CD8-positive, alpha-beta T cell (primary cell): ENCODE measurements at regions of chr9 and their contacts with region 1.

Region 1: DNA sequence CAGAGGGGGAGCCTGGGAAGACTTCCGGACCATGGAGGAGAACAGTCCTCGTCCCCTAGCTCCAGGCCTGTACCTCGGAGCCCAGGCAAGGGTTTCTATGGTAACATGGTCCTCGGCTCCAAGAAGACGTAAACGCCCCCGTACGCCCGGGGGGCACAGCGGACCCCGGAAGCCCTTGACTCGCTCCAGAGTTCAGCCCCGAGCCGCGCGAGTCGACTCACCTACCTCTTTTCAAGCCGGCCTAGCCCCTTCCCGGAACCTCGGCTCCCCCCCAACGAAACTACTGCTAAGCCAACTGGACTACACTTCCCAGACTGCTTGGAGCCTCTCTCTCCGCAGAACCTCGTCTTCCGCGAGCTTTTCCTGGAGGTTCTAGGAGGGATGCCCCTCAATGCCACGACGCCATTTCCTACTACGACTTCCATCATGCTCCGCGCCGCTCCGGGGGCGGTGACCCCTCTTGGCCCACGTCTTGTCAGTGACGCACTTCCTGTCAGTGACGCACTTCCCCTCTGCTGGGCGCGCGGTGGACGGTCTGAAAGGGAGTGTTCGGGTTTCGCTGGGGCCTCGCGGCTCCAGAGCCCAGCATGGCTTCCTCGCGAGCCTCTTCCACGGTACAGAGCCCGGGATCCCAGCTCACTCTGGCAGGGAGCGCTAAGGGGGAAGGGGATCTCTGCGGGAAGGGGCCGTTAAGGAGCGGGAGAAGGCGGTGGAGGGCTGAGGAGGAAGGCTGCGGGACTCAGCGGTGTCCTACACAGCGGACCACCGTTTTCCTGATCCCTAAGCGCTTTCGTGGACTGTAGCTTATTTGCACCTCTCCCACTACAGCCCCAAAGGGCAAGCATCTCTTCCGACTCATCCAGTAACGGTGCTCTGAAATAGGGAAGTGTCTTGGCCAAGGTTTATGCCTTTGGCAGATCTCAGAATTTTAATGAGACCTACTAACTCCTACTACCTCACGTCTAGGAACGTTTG is at the starts of genes CDC26 and PRPF4:
- DNase-seq: peak; percentile 87 to 99 (median 95)
- ATAC-seq: peak; percentile 89
- H3K4me3 ChIP-seq: peak within 1 kb of the TSS; percentile 78 to 97
- H3K4me3 Mint-ChIP-seq: no peak within 1 kb of the TSS
- H3K27ac ChIP-seq: peak within 1 kb of the TSS; percentile 92 to 97
- H3K27ac Mint-ChIP-seq: no peak within 1 kb of the TSS
- H3K4me1 ChIP-seq: peaks cover 12% of the 10 kb centered on the region
- H3K4me1 Mint-ChIP-seq: peaks cover 46% of the 10 kb centered on the region
- H3K27me3 ChIP-seq: no peaks in the 10 kb centered on the region
- H3K27me3 Mint-ChIP-seq: no peaks in the 10 kb centered on the region
- CTCF ChIP-seq: no peak
- total RNA-seq, gene CDC26: 13.1 TPM
- total RNA-seq, gene PRPF4: 24.4 to 24.8 TPM

Region 2: DNA sequence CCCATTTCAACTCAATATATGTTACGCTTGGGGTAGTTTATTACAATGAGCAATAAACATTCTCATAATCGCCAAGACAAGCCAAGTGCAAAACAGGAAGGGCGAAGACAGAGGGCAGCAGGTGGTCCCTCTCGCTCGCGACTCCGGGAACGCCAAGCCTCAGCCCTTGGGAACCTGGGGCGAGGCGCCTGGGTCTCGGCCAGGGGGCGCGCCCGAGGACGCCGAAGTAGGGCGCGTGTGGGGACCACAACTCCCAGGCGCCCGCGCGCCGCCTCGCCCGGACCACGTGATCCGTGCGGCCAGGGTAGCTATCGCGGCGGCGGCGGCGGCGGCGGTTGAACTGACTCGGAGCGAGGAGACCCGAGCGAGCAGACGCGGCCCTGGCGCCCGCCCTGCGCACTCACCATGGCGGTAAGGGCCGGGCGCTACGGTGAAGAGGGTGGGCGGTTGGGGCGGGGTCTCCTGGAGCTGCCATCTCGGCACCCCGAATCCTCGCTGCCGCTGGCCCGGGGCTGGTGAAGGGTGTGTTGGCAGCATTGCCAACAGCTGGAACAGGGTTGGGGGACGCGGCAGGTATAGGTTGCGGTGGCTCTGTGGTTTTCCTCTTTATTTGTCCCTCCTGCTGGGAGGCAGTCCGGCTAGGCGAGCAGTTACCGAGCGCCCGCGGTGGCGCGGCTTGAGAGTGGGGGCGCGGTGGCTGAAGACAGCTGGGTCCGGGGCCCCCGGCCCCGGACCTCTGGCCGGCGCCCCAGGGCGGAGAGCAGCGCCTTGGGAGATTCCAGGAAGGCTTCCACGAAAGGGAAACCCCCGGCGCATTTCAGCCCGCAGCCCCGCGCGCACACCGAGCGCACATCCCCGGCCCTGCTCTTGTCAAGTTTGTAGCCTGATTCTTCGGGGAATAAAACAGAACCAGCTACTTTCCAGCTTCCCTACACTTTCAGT is 124.5 kb before region 1 on chr9 and contains the start of gene SLC31A2:
- CTCF ChIA-PET with region 1: interaction called, 3 read pairs
- POLR2A ChIA-PET with region 1: interaction called, 4 read pairs
- intact Hi-C with region 1: loop called (anchors 1 kb)
- DNase-seq: peak; percentile 61 to 91 (median 85)
- ATAC-seq: peak; percentile 94
- H3K4me3 ChIP-seq: peak within 1 kb of the TSS; percentile 83 to 88
- H3K4me3 Mint-ChIP-seq: peak within 1 kb of the TSS; percentile 83
- H3K27ac ChIP-seq: peak within 1 kb of the TSS; percentile 38 to 52
- H3K27ac Mint-ChIP-seq: peak within 1 kb of the TSS; percentile 41
- H3K4me1 ChIP-seq: peaks cover 20% of the 10 kb centered on the region
- H3K4me1 Mint-ChIP-seq: peaks cover 35% of the 10 kb centered on the region
- H3K27me3 ChIP-seq: no peaks in the 10 kb centered on the region
- H3K27me3 Mint-ChIP-seq: no peaks in the 10 kb centered on the region
- CTCF ChIP-seq: peak; percentile 33
- total RNA-seq, gene SLC31A2: 5.4 to 6.0 TPM

Region 3: DNA sequence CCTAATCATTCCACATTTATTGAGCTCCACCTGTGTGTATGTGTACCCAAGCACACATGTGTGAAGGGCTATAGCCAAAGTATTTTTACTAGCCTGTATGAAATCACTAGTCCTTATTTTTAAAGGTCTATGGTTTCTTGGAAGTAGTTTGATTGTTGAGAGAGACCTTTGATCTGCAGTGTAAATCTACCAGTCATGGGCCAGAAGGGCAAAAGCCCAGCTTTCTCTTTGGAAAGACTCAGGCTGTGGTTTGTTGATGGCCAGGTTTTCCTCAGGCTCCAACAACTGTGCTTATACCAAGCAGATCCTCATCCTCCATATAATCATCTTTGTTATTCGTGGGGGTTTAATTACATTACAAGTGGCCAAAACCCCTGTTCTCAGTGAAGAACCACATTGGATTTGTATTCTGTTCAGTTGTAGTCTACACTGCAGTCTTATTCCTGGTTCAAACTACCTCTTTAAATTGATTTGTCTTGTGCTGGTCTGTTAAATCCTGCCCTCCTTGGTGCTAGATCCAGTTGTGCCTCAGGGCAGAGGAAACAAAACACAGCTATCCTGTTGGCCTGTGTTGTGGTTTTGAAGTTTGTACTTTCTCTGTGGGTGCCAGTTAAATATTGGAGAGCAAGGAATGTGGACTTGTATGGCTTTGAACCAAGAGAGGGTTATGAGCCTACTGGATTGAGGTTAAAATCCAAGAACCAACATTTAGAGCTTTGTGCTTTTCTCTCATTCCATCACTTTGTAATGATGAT is 13.3 kb before region 1 on chr9:
- CTCF ChIA-PET with region 1: interaction called, 17 read pairs
- POLR2A ChIA-PET with region 1: interaction called, 4 read pairs
- intact Hi-C with region 1: no loop called
- DNase-seq: no peak
- ATAC-seq: no peak
- H3K4me3 ChIP-seq: no peak overlapping the region
- H3K4me3 Mint-ChIP-seq: no peak overlapping the region
- H3K27ac ChIP-seq: no peak overlapping the region
- H3K27ac Mint-ChIP-seq: no peak overlapping the region
- H3K4me1 ChIP-seq: no peaks in the 10 kb centered on the region
- H3K4me1 Mint-ChIP-seq: no peaks in the 10 kb centered on the region
- H3K27me3 ChIP-seq: no peaks in the 10 kb centered on the region
- H3K27me3 Mint-ChIP-seq: no peaks in the 10 kb centered on the region
- CTCF ChIP-seq: no peak

Region 4: GRCh38 chr9:113401027-113401792 is 125.8 kb after region 1 on chr9 and contains the start of gene ALAD:
- CTCF ChIA-PET with region 1: interaction called, 32 read pairs
- POLR2A ChIA-PET with region 1: no interaction called
- intact Hi-C with region 1: loop called (anchors 1 kb)
- DNase-seq: peak; percentile 98 to 100 (median 100)
- ATAC-seq: peak; percentile 99
- H3K4me3 ChIP-seq: peak within 1 kb of the TSS; percentile 80 to 81
- H3K4me3 Mint-ChIP-seq: peak within 1 kb of the TSS; percentile 97
- H3K27ac ChIP-seq: peak within 1 kb of the TSS; percentile 53
- H3K27ac Mint-ChIP-seq: peak within 1 kb of the TSS; percentile 92
- H3K4me1 ChIP-seq: peaks cover 16% of the 10 kb centered on the region
- H3K4me1 Mint-ChIP-seq: peaks cover 28% of the 10 kb centered on the region
- H3K27me3 ChIP-seq: no peaks in the 10 kb centered on the region
- H3K27me3 Mint-ChIP-seq: no peaks in the 10 kb centered on the region
- CTCF ChIP-seq: peak; percentile 94
- total RNA-seq, gene ALAD: 11.2 to 11.5 TPM

Region 5: DNA sequence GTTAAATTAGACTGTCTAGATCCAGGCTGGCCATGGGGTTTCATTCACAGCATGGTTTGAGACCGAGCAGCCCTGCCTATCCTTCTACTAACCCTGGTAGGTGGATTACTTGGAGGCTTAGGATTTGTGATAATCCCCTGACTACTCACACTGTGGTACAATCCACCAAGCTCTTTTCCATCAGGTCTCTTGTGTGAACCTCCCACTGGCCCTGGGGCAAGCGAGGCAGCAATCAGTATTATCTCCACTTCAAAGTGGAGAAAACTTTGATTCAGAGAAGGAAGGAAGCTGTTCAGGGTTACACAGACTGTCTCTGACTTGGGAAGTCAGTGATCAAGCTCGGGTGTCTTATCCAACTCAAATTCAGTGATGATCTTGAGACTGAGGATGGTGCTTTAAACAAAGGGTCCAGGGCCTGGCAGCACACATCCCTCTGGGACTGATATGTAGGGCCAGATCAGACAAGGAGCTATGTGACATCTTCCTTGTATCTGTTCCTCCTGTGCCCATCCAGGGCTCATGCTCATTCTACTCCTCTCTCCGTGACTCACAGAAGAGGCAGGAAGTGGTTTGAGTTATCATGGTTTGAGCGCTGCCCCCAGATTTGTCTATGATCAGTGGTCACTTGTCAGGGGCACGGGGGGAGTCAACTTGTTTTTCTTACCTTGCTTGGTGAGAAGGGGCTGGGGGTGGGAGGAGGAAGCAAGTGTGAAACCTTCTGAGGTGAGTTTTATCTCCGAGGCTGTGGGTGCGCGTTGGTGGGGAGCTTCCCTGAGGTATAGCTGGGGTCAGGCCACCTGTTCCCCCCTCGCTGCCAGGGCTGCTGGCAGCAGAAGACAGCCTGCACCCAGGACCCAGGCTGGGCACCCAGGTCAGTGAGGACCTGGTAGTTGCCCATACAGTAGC is 236.7 kb after region 1 on chr9:
- CTCF ChIA-PET with region 1: interaction called, 6 read pairs
- POLR2A ChIA-PET with region 1: no interaction called
- intact Hi-C with region 1: loop called in 1 of 2 experiments (anchors 10 kb)
- DNase-seq: peak; percentile 41 to 89 (median 77)
- ATAC-seq: peak; percentile 68
- H3K4me3 ChIP-seq: peak overlapping the region; percentile 16 to 26
- H3K4me3 Mint-ChIP-seq: peak overlapping the region; percentile 74
- H3K27ac ChIP-seq: peak overlapping the region; percentile 60 to 65
- H3K27ac Mint-ChIP-seq: peak overlapping the region; percentile 90
- H3K4me1 ChIP-seq: peaks cover 59% of the 10 kb centered on the region
- H3K4me1 Mint-ChIP-seq: peaks cover 68% of the 10 kb centered on the region
- H3K27me3 ChIP-seq: no peaks in the 10 kb centered on the region
- H3K27me3 Mint-ChIP-seq: no peaks in the 10 kb centered on the region
- CTCF ChIP-seq: no peak

Region 6: DNA sequence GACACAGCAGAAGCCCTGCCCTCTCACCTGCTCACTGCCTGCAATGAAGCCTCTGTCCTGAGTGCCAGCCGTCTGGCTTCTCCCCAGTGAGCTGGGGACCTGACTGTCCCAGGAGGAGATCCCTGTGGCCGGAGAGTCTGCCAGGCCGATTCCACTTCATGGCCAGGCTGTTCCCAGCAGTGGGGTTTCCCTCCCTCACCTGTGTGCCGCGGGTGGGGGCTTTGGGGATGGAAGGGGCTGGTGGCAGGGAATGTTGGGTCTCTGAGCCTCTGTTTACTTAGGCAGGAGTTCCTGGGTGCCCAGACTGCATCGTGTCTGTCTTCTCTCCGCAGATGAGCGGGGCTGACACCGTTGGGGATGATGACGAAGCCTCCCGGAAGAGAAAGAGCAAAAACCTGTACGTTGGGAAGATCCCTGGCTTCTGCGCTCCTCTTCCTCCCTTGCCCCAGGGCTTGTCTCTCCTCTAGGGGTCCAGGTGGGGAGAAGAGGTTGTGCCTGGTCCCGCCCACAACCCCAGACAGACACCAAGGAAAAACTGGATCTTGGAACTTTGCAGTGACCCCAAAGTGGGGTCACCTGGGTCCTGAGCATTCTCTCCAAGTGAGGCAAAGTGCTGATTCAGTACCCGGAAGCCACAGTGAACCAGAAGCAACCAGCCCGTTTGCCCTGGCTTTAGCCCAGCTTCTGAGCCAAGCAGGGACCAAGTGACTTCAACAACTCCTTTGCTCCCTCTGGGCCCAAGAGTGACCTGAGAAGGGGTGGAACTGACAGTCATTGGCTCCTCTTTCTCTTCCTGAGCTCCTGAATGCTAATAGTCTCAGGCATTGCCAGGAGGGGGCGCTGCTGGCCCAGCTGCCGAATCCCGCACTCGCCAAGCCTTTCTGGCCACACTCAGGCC is 315.8 kb after region 1 on chr9:
- CTCF ChIA-PET with region 1: interaction called, 16 read pairs
- POLR2A ChIA-PET with region 1: no interaction called
- intact Hi-C with region 1: no loop called
- DNase-seq: peak in 4 of 9 experiments; percentile 48 to 60 (median 53)
- ATAC-seq: no peak
- H3K4me3 ChIP-seq: no peak overlapping the region
- H3K4me3 Mint-ChIP-seq: no peak overlapping the region
- H3K27ac ChIP-seq: no peak overlapping the region
- H3K27ac Mint-ChIP-seq: no peak overlapping the region
- H3K4me1 ChIP-seq: peaks cover 6% of the 10 kb centered on the region
- H3K4me1 Mint-ChIP-seq: peaks cover 27% of the 10 kb centered on the region
- H3K27me3 ChIP-seq: no peaks in the 10 kb centered on the region
- H3K27me3 Mint-ChIP-seq: no peaks in the 10 kb centered on the region
- CTCF ChIP-seq: peak; percentile 50

Region 7: GRCh38 chr9:114405294-114406034 is 1130.0 kb after region 1 on chr9:
- CTCF ChIA-PET with region 1: no interaction called
- POLR2A ChIA-PET with region 1: no interaction called
- intact Hi-C with region 1: no loop called
- DNase-seq: peak; percentile 65 to 91 (median 81)
- ATAC-seq: peak; percentile 99
- H3K4me3 ChIP-seq: no peak overlapping the region
- H3K4me3 Mint-ChIP-seq: no peak overlapping the region
- H3K27ac ChIP-seq: no peak overlapping the region
- H3K27ac Mint-ChIP-seq: peak overlapping the region; percentile 14
- H3K4me1 ChIP-seq: peaks cover 11% of the 10 kb centered on the region
- H3K4me1 Mint-ChIP-seq: peaks cover 7% of the 10 kb centered on the region
- H3K27me3 ChIP-seq: no peaks in the 10 kb centered on the region
- H3K27me3 Mint-ChIP-seq: no peaks in the 10 kb centered on the region
- CTCF ChIP-seq: peak; percentile 64